ENCODE measurements at regions of chr5 and their contacts with region 1.

Region 1: GRCh38 chr5:163658702-163659567 is 153.5 kb downstream of the MAT2B start:
- DNase-seq: no peak
- H3K4me3 ChIP-seq: no peak overlapping the region
- H3K27ac ChIP-seq: no peak overlapping the region
- H3K4me1 ChIP-seq: peaks cover 16% of the 10 kb centered on the region
- H3K27me3 ChIP-seq: no peaks in the 10 kb centered on the region
- CTCF ChIP-seq: no peak

Region 2: GRCh38 chr5:163585206-163585605 is 73.7 kb before region 1 on chr5:
- intact Hi-C with region 1: loop called (anchors 5 kb)
- DNase-seq: no peak
- H3K4me3 ChIP-seq: no peak overlapping the region
- H3K27ac ChIP-seq: no peak overlapping the region
- H3K4me1 ChIP-seq: peaks cover 6% of the 10 kb centered on the region
- H3K27me3 ChIP-seq: no peaks in the 10 kb centered on the region
- CTCF ChIP-seq: no peak

Measured in colonic mucosa (tissue), 4 donors.